ENCODE measurements at regions of chr1 and their contacts with region 1.

Region 1: GRCh38 chr1:220776720-220777326 is 9.9 kb upstream of the MTARC1 start:
- DNase-seq: peak; percentile 90
- ATAC-seq: peak; percentile 99
- H3K4me3 Mint-ChIP-seq: no peak overlapping the region
- H3K27ac Mint-ChIP-seq: no peak overlapping the region
- H3K4me1 Mint-ChIP-seq: peaks cover 14% of the 10 kb centered on the region
- H3K27me3 Mint-ChIP-seq: no peaks in the 10 kb centered on the region
- CTCF ChIP-seq: peak; percentile 86

Region 2: DNA sequence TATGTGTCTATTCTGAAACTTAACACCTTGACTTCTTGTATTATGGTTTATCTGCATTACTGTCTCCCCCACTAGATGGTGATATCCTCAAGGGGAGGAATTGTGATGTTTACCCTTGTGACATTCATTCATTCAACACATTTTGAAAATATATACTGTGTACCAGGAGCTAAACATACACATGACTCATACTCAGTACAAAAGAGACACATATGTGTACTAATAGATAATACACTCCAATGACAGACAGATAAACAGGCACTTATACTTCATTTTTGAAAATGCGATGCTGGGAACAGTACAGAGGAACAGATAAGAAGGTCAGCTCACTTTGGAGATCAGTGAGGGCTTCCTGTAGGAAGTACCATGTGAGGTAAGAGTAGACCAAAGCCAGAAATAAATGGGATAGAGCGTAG is 495.7 kb before region 1 on chr1:
- CTCF ChIA-PET with region 1: interaction called, 31 read pairs
- POLR2A ChIA-PET with region 1: no interaction called
- DNase-seq: no peak
- ATAC-seq: peak; percentile 86
- H3K4me3 Mint-ChIP-seq: no peak overlapping the region
- H3K27ac Mint-ChIP-seq: no peak overlapping the region
- H3K4me1 Mint-ChIP-seq: no peaks in the 10 kb centered on the region
- H3K27me3 Mint-ChIP-seq: no peaks in the 10 kb centered on the region
- CTCF ChIP-seq: no peak

Region 3: GRCh38 chr1:220631238-220631832 is 145.5 kb before region 1 on chr1:
- CTCF ChIA-PET with region 1: no interaction called
- POLR2A ChIA-PET with region 1: no interaction called
- DNase-seq: no peak
- ATAC-seq: peak; percentile 30; the same call in 1 of the 2 replicates
- H3K4me3 Mint-ChIP-seq: no peak overlapping the region
- H3K27ac Mint-ChIP-seq: 0 out of 2 replicates have a peak overlapping the region, but pooled peaks have one; percentile 0
- H3K4me1 Mint-ChIP-seq: peaks cover 28% of the 10 kb centered on the region
- H3K27me3 Mint-ChIP-seq: no peaks in the 10 kb centered on the region
- CTCF ChIP-seq: no peak

Region 4: GRCh38 chr1:220680085-220680687 is 96.6 kb before region 1 on chr1:
- CTCF ChIA-PET with region 1: interaction called, 20 read pairs
- POLR2A ChIA-PET with region 1: interaction called, 3 read pairs
- DNase-seq: no peak
- ATAC-seq: peak; percentile 97
- H3K4me3 Mint-ChIP-seq: no peak overlapping the region
- H3K27ac Mint-ChIP-seq: no peak overlapping the region
- H3K4me1 Mint-ChIP-seq: no peaks in the 10 kb centered on the region
- H3K27me3 Mint-ChIP-seq: no peaks in the 10 kb centered on the region
- CTCF ChIP-seq: peak; percentile 54

Region 5: DNA sequence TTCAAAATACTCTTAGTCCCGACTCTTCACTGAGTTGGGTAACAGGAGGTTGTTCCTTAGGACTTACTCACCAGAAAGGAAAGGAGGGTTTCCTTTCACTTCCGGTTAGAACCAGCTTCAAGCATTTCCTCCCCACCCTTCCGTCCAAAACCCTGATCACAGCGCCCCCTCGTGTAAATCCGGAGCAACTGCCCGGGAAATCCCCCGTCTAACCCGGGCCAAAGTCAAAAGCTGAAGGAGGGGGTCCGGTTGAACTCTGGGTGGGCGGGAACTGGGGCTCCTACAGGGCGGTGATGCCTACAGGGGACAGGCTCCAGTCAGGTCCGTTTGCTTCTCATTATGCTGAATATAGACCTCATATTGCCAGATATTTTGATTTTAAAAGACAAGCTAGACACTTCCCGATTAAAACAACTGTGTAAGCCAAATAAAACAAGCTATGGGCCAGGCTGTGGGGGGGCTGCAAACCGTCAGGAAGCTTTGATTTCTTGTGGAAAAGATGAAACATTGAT is 43.7 kb before region 1 on chr1:
- CTCF ChIA-PET with region 1: interaction called, 20 read pairs
- POLR2A ChIA-PET with region 1: interaction called, 4 read pairs
- DNase-seq: peak; percentile 89
- ATAC-seq: peak; percentile 99
- H3K4me3 Mint-ChIP-seq: no peak overlapping the region
- H3K27ac Mint-ChIP-seq: no peak overlapping the region
- H3K4me1 Mint-ChIP-seq: no peaks in the 10 kb centered on the region
- H3K27me3 Mint-ChIP-seq: no peaks in the 10 kb centered on the region; the same call in 1 of the 2 replicates
- CTCF ChIP-seq: peak; percentile 96

Region 6: DNA sequence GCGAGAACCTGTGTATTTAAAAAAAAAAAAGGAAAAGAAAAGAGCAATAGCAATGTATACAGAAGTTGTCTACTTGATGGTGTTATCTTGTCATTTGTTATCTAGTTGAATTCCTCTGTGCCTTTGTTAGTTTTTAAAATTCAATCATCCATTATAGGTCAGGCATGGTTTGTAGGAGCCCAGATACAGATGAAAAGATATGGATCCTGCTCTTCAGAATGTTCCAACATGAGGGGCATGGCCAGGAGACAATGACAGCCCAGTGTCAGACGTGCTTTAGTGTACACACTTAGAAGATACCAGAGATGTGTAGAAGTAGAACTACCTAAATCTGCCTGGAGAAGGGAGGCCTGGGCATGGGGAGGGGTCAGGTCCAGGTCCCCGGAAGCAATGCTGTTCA is 12.1 kb before region 1 on chr1:
- CTCF ChIA-PET with region 1: interaction called, 10 read pairs
- POLR2A ChIA-PET with region 1: no interaction called
- DNase-seq: no peak
- ATAC-seq: no peak
- H3K4me3 Mint-ChIP-seq: no peak overlapping the region
- H3K27ac Mint-ChIP-seq: no peak overlapping the region
- H3K4me1 Mint-ChIP-seq: no peaks in the 10 kb centered on the region
- H3K27me3 Mint-ChIP-seq: no peaks in the 10 kb centered on the region
- CTCF ChIP-seq: no peak